Prostate gland (tissue), 2 donors: ENCODE measurements at regions of chrX and their contacts with region 1.

Region 1: GRCh38 chrX:154534862-154535670 is 11.6 kb downstream of the G6PD start:
- DNase-seq: peak; percentile 75
- H3K4me3 ChIP-seq: no peak overlapping the region
- H3K27ac ChIP-seq: no peak overlapping the region
- H3K4me1 ChIP-seq: no peaks in the 10 kb centered on the region
- H3K27me3 ChIP-seq: no peaks in the 10 kb centered on the region
- CTCF ChIP-seq: peak; percentile 66 to 99 (median 95)
- POLR2A ChIP-seq: no peak

Region 2: GRCh38 chrX:154397819-154398724 is 137.0 kb before region 1 on chrX and contains the start of gene RPL10:
- intact Hi-C with region 1: loop called (anchors 5 kb)
- DNase-seq: peak; percentile 92
- H3K4me3 ChIP-seq: peak within 1 kb of the TSS; percentile 56 to 62
- H3K27ac ChIP-seq: peak within 1 kb of the TSS; percentile 95 to 96
- H3K4me1 ChIP-seq: no peaks in the 10 kb centered on the region
- H3K27me3 ChIP-seq: no peaks in the 10 kb centered on the region
- CTCF ChIP-seq: peak in 1 of 4 experiments; percentile 25
- POLR2A ChIP-seq: peak; percentile 81
- total RNA-seq, gene RPL10: 3,702 to 5,500 TPM